Naive thymus-derived CD4-positive, alpha-beta T cell (primary cell): ENCODE measurements at regions of chr18 and their contacts with region 1.

Region 1: GRCh38 chr18:21704603-21705364 is at the start of gene ABHD3:
- DNase-seq: peak; percentile 85 to 94 (median 91)
- ATAC-seq: peak; percentile 97
- H3K4me3 ChIP-seq: peak within 1 kb of the TSS; percentile 83
- H3K4me3 Mint-ChIP-seq: peak within 1 kb of the TSS; percentile 91 to 99 (median 97)
- H3K27ac ChIP-seq: peak within 1 kb of the TSS; percentile 93
- H3K27ac Mint-ChIP-seq: peak within 1 kb of the TSS; percentile 87 to 97 (median 94)
- H3K4me1 ChIP-seq: peaks cover 10 to 21% of the 10 kb centered on the region in 2 donors
- H3K4me1 Mint-ChIP-seq: peaks cover 12 to 56% (median 39%) of the 10 kb centered on the region in 7 donors
- H3K27me3 ChIP-seq: no peaks in the 10 kb centered on the region
- H3K27me3 Mint-ChIP-seq: no peaks in the 10 kb centered on the region
- total RNA-seq, gene ABHD3: 26.9 to 53.1 (median 43.6) TPM

Region 2: GRCh38 chr18:21600526-21601410 is 104.0 kb before region 1 on chr18 and contains the start of gene ESCO1:
- CTCF ChIA-PET with region 1: interaction called, 3 read pairs
- POLR2A ChIA-PET with region 1: interaction called, 28 read pairs
- intact Hi-C with region 1: loop called (anchors 1 kb)
- DNase-seq: peak; percentile 88 to 97 (median 95)
- ATAC-seq: peak; percentile 90
- H3K4me3 ChIP-seq: peak within 1 kb of the TSS; percentile 99
- H3K4me3 Mint-ChIP-seq: peak within 1 kb of the TSS; percentile 91 to 99 (median 96)
- H3K27ac ChIP-seq: peak within 1 kb of the TSS; percentile 84
- H3K27ac Mint-ChIP-seq: peak within 1 kb of the TSS; percentile 96 to 100 (median 99)
- H3K4me1 ChIP-seq: peaks cover 12 to 24% of the 10 kb centered on the region in 2 donors
- H3K4me1 Mint-ChIP-seq: peaks cover 16 to 57% (median 36%) of the 10 kb centered on the region in 7 donors
- H3K27me3 ChIP-seq: no peaks in the 10 kb centered on the region
- H3K27me3 Mint-ChIP-seq: no peaks in the 10 kb centered on the region
- total RNA-seq, gene ESCO1: 25.9 to 36.4 (median 35.1) TPM

Region 3: DNA sequence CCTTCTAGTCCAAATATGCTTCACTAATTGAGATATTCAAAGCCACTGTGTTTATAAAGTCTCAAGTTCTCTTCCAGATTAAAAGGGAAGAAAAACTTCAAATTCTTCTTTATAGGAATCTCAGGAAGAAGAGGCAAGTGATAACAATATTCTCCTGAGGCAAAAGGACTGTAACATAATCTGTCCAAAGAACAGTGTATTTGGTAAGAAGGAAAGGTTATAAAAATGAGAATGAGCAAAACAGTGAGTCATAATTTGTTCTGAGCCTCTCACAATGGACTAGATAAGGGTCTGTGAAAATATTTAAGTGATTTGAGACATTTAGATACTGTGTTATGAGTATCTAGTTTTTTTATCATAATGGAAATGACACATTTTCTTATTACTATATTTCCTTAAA is 48.4 kb before region 1 on chr18:
- CTCF ChIA-PET with region 1: no interaction called
- POLR2A ChIA-PET with region 1: no interaction called
- intact Hi-C with region 1: loop called in 1 of 2 experiments (anchors 10 kb)
- DNase-seq: no peak
- ATAC-seq: no peak
- H3K4me3 ChIP-seq: no peak overlapping the region
- H3K4me3 Mint-ChIP-seq: no peak overlapping the region
- H3K27ac ChIP-seq: no peak overlapping the region
- H3K27ac Mint-ChIP-seq: peak overlapping the region in 3 of 9 donors; percentile 9 to 65 (median 33)
- H3K4me1 ChIP-seq: no peaks in the 10 kb centered on the region
- H3K4me1 Mint-ChIP-seq: peaks cover 0 to 3% (median 0%) of the 10 kb centered on the region in 7 donors
- H3K27me3 ChIP-seq: no peaks in the 10 kb centered on the region
- H3K27me3 Mint-ChIP-seq: no peaks in the 10 kb centered on the region

Region 4: DNA sequence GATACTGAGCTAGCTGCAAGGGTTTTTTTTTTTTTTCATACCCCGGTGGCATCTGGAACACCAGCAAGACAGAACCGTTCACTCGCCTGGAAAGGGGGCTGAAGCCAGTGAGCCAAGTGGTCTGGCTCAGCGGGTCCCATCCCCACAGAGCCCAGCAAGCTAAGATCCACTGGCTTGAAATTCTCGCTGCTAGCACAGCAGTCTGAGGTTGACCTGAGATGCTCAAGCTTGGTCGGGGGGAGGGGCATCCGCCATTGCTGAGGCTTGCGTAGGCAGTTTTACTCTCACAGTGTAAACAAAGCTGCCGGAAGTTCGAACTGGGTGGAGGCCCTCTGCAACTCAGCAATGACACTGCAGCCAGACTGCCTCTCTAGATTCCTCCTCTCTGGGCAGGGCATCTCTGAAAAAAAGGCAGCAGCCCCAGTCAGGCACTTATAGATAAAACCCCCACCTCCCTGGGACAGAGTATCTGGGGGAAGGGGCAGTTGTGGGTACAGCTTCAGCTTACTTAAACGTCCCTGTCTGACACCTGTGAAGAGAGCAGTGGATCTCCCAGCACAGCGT is 30.8 kb after region 1 on chr18:
- CTCF ChIA-PET with region 1: no interaction called
- POLR2A ChIA-PET with region 1: interaction called, 9 read pairs
- intact Hi-C with region 1: loop called (anchors 1 kb)
- DNase-seq: peak in 6 of 9 donors; percentile 7 to 43 (median 35)
- ATAC-seq: no peak
- H3K4me3 ChIP-seq: no peak overlapping the region
- H3K4me3 Mint-ChIP-seq: no peak overlapping the region
- H3K27ac ChIP-seq: no peak overlapping the region
- H3K27ac Mint-ChIP-seq: peak overlapping the region in 7 of 9 donors; percentile 15 to 79 (median 26)
- H3K4me1 ChIP-seq: peaks cover 0 to 6% of the 10 kb centered on the region in 2 donors
- H3K4me1 Mint-ChIP-seq: peaks cover 7 to 19% (median 12%) of the 10 kb centered on the region in 7 donors
- H3K27me3 ChIP-seq: no peaks in the 10 kb centered on the region
- H3K27me3 Mint-ChIP-seq: peaks cover 0 to 24% (median 5%) of the 10 kb centered on the region in 5 donors

Region 5: GRCh38 chr18:21815101-21815500 is 110.3 kb after region 1 on chr18:
- CTCF ChIA-PET with region 1: no interaction called
- POLR2A ChIA-PET with region 1: no interaction called
- intact Hi-C with region 1: loop called in 1 of 2 experiments (anchors 10 kb)
- DNase-seq: no peak
- ATAC-seq: no peak
- H3K4me3 ChIP-seq: no peak overlapping the region
- H3K4me3 Mint-ChIP-seq: no peak overlapping the region
- H3K27ac ChIP-seq: no peak overlapping the region
- H3K27ac Mint-ChIP-seq: no peak overlapping the region
- H3K4me1 ChIP-seq: no peaks in the 10 kb centered on the region
- H3K4me1 Mint-ChIP-seq: peaks cover 0 to 7% (median 0%) of the 10 kb centered on the region in 7 donors
- H3K27me3 ChIP-seq: no peaks in the 10 kb centered on the region
- H3K27me3 Mint-ChIP-seq: no peaks in the 10 kb centered on the region

Region 6: DNA sequence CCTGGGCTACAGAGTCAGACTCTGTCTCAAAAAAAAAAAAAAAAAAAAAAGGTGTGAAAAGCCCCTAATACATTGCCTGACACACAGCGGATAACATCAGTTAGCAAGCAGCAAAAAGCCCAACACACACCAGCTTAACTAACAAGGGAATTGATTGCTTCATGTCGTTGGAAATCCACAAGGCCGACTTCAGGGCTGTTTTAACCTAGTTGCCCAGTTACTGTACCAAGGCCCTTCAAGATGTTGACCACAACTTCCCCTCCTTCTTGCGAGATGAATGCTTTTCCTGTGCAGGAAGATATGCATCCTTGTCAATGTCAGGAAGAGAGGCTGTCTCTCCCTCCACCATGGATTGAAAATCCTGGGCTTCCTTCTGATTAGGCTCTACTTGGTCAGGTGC is 238.7 kb after region 1 on chr18:
- CTCF ChIA-PET with region 1: no interaction called
- POLR2A ChIA-PET with region 1: no interaction called
- intact Hi-C with region 1: no loop called
- DNase-seq: no peak
- ATAC-seq: no peak
- H3K4me3 ChIP-seq: no peak overlapping the region
- H3K4me3 Mint-ChIP-seq: no peak overlapping the region
- H3K27ac ChIP-seq: no peak overlapping the region
- H3K27ac Mint-ChIP-seq: no peak overlapping the region
- H3K4me1 ChIP-seq: no peaks in the 10 kb centered on the region
- H3K4me1 Mint-ChIP-seq: no peaks in the 10 kb centered on the region
- H3K27me3 ChIP-seq: no peaks in the 10 kb centered on the region
- H3K27me3 Mint-ChIP-seq: peaks cover 0 to 21% (median 5%) of the 10 kb centered on the region in 5 donors

Region 7: DNA sequence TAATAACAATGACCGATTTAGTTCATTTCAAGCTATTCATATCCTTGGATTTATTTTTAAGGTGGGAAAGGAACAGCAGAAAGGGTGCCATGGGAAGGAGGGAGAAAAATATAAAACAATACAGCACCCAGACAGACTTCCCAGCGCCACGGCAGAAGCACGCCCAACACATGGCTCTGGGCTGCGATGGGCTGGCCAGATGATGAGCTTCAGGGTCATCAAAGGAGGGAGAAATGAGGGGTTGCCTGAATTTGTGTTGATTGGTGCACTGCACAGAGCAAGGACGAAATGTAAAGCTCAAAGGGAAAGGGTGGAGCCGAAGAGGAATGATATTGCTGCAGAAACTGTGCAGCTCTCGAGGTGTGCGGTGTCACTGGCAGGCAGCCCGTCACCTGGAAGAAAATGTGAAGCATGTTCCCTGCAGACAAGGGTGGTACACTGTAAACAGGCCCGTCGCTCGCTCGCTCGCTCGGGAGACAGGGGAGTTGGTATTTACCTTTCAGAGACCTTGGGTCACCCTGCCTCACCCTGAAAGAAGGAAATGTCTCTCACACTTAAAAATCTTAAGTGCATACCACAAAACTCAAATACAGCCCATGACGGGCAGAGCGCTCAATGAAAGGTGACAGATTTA is 908.4 kb after region 1 on chr18:
- CTCF ChIA-PET with region 1: no interaction called
- POLR2A ChIA-PET with region 1: no interaction called
- intact Hi-C with region 1: no loop called
- DNase-seq: no peak
- ATAC-seq: no peak
- H3K4me3 ChIP-seq: no peak overlapping the region
- H3K4me3 Mint-ChIP-seq: no peak overlapping the region
- H3K27ac ChIP-seq: no peak overlapping the region
- H3K27ac Mint-ChIP-seq: no peak overlapping the region
- H3K4me1 ChIP-seq: no peaks in the 10 kb centered on the region
- H3K4me1 Mint-ChIP-seq: no peaks in the 10 kb centered on the region
- H3K27me3 ChIP-seq: no peaks in the 10 kb centered on the region
- H3K27me3 Mint-ChIP-seq: peaks cover 0 to 18% (median 3%) of the 10 kb centered on the region in 5 donors